ENCODE measurements at regions of chr10 and their contacts with region 1.

Region 1: DNA sequence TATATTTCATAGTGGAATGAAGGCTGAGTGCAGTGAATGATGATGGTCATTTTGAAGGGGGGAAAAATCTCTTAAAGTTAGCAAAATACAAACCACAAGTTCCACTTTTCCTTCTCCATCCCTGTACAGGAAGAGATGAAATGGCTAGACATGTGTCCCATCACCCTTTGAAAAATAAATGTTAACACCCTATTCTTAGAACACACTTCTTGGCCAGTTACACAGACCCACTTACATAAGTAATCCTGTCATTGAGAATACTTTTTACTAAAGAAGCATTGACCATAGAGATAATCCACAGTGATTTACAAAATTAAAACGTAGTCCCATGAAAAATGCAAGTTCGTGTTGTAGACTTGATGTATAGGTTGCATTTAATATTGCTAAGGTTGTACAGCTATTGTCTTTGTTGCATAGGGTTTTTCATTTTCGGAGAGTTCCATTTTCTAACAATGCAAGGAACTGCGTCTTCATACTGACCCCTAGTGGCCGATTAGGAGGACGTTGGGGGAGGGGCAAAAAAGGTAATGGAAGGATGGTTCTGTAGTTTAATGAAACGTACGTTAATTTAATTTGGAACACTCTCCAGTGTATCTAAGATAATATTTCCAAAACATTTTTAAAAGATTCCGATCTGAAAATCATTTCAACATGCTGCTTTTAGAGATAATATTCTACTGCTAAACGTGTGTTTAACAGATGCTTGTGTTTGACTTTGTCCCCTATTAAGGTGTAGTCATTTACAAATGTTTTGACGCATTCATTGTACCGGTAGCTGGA is 60.9 kb downstream of the ARMC3 start:
- DNase-seq: peak; percentile 72
- H3K4me3 ChIP-seq: no peak overlapping the region; a peak in 1 of 4 replicates
- H3K27ac ChIP-seq: no peak overlapping the region
- H3K4me1 ChIP-seq: no peaks in the 10 kb centered on the region; a peak in 1 of 4 replicates
- H3K27me3 ChIP-seq: no peaks in the 10 kb centered on the region; the same call in 1 of the 2 replicates
- CTCF ChIP-seq: peak; percentile 96
- EP300 ChIP-seq: peak in 1 of 2 experiments; percentile 79; a peak in 2 of 4 replicates
- RAD21 ChIP-seq: peak; percentile 99

Region 2: GRCh38 chr10:21993360-21994001 is 995.3 kb before region 1 on chr10:
- CTCF ChIA-PET with region 1: interaction called, 43 read pairs
- POLR2A ChIA-PET with region 1: no interaction called
- DNase-seq: no peak
- H3K4me3 ChIP-seq: no peak overlapping the region
- H3K27ac ChIP-seq: no peak overlapping the region
- H3K4me1 ChIP-seq: peaks cover 0 to 3% of the 10 kb centered on the region in 2 experiments; a peak in 2 of 4 replicates
- H3K27me3 ChIP-seq: no peaks in the 10 kb centered on the region
- CTCF ChIP-seq: peak; percentile 71
- EP300 ChIP-seq: no peak
- RAD21 ChIP-seq: peak; percentile 60

Region 3: DNA sequence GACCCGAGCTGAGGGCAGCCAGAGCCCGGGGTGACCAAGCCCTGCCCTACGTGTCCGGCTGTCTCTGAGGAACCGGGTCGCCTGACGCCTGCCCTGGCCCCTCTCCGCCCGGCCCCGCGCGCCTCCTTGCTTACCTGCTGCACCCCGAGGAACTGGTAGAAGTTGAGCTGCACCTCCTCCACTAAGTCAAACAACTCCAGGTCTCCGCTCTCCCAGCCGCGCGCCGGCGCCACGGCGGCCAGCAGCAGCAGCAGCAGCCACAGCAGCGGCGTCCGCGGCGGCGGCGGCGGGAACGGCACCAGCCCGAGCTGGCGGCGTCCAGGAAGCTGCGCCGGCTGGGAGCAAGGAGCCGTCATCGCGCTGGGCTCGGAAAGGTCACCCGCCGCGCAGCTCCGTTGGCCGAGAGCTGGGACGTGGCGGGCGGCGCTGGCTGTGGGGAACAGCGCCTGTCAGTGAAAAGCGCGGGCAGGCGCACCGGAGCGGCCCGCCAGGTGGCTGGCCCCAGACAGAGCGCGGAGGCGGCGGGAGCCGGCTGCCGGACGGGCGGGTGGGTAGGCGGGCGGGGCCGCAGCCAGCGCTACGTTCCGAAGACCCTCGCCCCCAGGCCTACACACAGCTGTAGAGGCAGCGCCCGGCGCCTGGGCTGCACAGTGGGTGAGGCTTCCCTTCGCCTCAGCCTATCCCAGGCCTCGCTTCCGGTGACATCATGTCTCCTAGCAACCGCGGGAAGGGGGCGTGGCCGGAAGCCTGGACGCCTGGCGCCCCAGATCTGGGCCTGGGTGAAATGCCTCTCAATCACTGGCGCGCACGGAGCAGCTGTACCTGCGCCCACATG is 985.5 kb before region 1 on chr10 and contains the start of gene DNAJC1:
- CTCF ChIA-PET with region 1: interaction called, 10 read pairs
- POLR2A ChIA-PET with region 1: no interaction called
- DNase-seq: peak; percentile 95
- H3K4me3 ChIP-seq: peak within 1 kb of the TSS; percentile 87 to 94
- H3K27ac ChIP-seq: peak within 1 kb of the TSS; percentile 74 to 91
- H3K4me1 ChIP-seq: peaks cover 0 to 9% of the 10 kb centered on the region in 2 experiments; a peak in 2 of 4 replicates
- H3K27me3 ChIP-seq: no peaks in the 10 kb centered on the region
- CTCF ChIP-seq: no peak
- EP300 ChIP-seq: no peak
- RAD21 ChIP-seq: 0 out of 2 replicates have a peak, but pooled peaks have one; percentile 1
- polyA plus RNA-seq, gene DNAJC1: 8.0 and 9.3 TPM in 2 replicates

Region 4: DNA sequence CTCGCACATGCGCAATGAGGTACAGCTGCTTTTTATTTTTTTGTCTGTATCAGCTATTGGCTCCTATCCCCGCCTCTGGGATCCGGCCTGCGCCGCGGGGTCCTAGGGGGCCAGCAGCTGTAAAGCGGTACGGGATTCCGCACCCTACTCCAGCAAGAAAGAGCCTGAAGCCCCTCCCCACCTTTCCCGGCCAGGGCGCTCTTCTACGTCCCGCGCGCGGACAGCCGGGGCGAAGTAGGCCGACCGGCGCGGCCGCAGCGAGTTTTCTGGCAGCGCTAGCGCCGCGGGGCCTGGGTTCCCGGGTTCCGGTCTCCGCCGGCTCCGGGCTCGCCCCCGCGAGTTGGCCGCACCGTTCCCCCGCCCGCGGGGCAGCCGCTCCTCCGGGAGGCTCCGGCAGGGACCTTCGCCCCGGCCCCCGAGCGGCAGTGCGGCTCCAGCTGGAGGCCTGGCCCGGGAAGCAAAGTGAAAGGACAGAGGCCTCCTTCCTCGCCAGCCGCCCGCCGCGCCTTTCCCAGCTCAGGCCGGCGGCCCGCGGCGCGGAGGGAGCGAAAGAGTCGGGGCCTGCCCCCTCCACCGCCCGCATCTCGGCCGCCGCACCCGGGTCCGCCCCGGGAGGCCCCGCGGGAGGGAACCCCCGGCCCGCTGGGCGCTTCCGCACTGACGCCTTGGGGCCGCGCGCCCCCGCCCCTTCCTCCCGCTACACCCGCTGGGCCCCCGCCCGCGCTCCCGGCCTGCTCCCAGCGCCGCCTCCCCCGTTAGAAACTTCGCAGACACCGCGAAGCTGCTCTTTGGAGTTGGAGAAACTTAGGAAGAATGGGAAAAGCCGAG is 648.2 kb before region 1 on chr10:
- CTCF ChIA-PET with region 1: interaction called, 13 read pairs
- POLR2A ChIA-PET with region 1: no interaction called
- DNase-seq: peak; percentile 89
- H3K4me3 ChIP-seq: peak overlapping the region; percentile 72 to 84
- H3K27ac ChIP-seq: peak overlapping the region; percentile 91 to 92
- H3K4me1 ChIP-seq: peaks cover 0 to 13% of the 10 kb centered on the region in 2 experiments; a peak in 2 of 4 replicates
- H3K27me3 ChIP-seq: peaks cover 53% of the 10 kb centered on the region
- CTCF ChIP-seq: no peak
- EP300 ChIP-seq: no peak
- RAD21 ChIP-seq: no peak

Region 5: DNA sequence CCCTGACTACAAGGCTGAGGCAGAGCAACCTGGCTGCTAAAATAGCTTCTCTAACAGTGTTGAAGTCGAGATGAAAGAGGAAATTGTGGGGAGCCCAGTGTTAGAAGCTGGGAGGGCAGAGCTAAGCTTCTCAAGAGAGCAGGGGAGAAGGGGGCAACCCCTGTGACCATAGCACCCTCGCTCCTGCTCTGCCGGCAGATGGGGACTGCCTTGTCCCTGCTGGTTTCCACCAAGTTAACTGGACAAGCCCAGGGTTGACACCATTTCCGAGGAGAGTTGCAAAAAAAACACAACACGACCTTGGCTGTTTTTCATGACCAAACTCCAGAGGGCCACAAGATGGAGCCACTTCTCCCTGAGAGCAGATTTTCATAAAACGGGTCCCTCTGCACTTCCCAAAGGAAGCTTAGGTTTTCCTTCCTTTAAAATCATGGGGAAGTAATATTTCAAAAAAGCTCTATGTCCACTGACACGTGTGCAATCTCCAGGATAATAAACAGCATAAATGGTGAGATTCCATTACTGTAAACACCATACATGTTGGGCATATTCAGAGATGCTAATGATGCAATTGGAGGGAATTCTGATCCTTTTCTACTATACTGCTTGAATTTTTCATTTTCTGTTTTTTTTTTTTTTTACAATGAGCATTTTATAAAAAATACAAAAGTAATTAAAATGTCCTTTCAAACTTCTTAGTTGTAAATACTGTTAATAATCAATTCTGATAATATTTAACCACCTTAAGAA is 414.8 kb before region 1 on chr10:
- CTCF ChIA-PET with region 1: interaction called, 14 read pairs
- POLR2A ChIA-PET with region 1: no interaction called
- DNase-seq: peak; percentile 27
- H3K4me3 ChIP-seq: no peak overlapping the region
- H3K27ac ChIP-seq: no peak overlapping the region
- H3K4me1 ChIP-seq: no peaks in the 10 kb centered on the region; a peak in 1 of 4 replicates
- H3K27me3 ChIP-seq: no peaks in the 10 kb centered on the region
- CTCF ChIP-seq: peak; percentile 63
- EP300 ChIP-seq: no peak
- RAD21 ChIP-seq: peak; percentile 53

Measured in SK-N-SH (cell line).